ENCODE measurements at regions of chr20 and their contacts with region 1.

Region 1: DNA sequence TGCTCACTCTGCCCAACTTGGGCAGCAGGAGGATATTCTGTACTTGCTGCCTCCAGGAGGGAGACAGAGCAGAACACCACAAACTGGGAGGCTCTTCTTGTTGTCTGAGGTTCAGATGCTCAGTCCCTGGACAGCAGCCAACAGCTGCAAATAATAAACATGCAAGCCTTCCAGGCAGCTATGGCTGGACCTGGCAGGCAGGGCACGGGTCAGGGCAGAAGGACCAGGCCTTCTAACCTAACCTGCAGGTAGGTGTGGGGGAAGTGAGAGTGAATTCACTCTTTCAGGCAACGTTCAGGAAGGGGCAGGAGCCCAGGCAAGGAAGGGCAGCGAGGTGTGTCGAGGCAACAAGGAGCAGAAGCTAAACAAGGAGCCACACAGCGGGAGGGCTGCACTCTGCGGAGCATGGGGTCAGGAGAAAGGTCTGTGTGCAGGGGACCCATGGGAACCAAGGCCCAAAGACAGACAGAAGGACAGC is 31.5 kb downstream of the NINL start:
- DNase-seq: peak; percentile 67
- ATAC-seq: peak; percentile 74
- H3K4me3 ChIP-seq: no peak overlapping the region
- H3K27ac ChIP-seq: no peak overlapping the region
- H3K4me1 ChIP-seq: peaks cover 24% of the 10 kb centered on the region
- H3K27me3 ChIP-seq: no peaks in the 10 kb centered on the region
- CTCF ChIP-seq: no peak
- POLR2A ChIP-seq: no peak
- RAD21 ChIP-seq: no peak

Region 2: GRCh38 chr20:25574425-25574824 is 20.6 kb after region 1 on chr20:
- CTCF ChIA-PET with region 1: no interaction called
- POLR2A ChIA-PET with region 1: no interaction called
- dilution Hi-C with region 1: no loop called
- in situ Hi-C with region 1: no loop called
- intact Hi-C with region 1: loop called (anchors 2 kb)
- DNase-seq: peak; percentile 52
- ATAC-seq: 0 out of 2 replicates have a peak, but pooled peaks have one; percentile 15
- H3K4me3 ChIP-seq: no peak overlapping the region
- H3K27ac ChIP-seq: no peak overlapping the region
- H3K4me1 ChIP-seq: peaks cover 15% of the 10 kb centered on the region
- H3K27me3 ChIP-seq: no peaks in the 10 kb centered on the region
- CTCF ChIP-seq: peak; percentile 51
- POLR2A ChIP-seq: no peak
- RAD21 ChIP-seq: peak; percentile 60